OCI-LY7 (cell line): ENCODE measurements at regions of chr6 and their contacts with region 1.

Region 1: GRCh38 chr6:112180095-112180820 is 74.1 kb downstream of the LAMA4 start:
- DNase-seq: peak; percentile 78
- H3K4me3 ChIP-seq: no peak overlapping the region
- H3K27ac ChIP-seq: no peak overlapping the region
- H3K4me1 ChIP-seq: no peaks in the 10 kb centered on the region
- CTCF ChIP-seq: peak; percentile 95

Region 2: DNA sequence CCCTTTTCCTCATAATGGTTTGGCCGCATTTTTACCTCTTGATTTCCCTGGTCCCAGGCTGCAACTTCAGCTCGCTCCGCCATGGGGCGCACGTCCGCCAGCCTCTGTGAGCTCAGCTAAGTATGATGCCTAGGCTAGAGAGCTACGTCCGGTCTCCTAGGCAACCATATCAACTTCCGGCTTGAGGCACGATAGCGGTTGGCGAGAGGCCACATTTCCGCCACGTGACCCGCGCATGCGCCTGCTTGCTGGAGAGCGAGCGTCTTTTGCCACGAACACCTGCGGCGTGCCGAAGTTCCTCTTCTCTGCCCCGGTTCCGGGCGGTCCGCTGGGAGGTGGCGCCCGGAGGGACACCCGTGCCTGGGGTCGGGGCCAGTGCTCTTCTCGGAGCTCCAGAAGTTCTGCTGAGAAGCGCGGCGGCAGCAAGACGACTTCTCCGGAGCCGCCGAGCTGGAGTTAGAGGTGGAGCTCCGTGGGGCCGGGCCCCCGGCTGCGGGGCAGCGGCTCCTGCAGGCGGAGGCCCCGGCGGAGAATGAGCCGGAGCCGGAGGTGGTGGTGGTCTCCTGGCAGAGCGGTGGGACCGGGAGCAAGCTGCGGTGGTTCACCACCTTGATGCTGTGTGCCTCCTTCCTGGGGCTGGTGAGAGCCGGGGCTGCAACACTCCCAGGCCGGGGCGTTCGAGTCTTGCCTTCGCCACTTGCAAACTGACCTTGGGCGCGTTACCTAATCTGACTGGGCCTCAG is 921.0 kb before region 1 on chr6:
- CTCF ChIA-PET with region 1: no interaction called
- POLR2A ChIA-PET with region 1: no interaction called
- intact Hi-C with region 1: no loop called
- DNase-seq: peak; percentile 100
- H3K4me3 ChIP-seq: peak overlapping the region; percentile 81
- H3K27ac ChIP-seq: peak overlapping the region; percentile 67
- H3K4me1 ChIP-seq: peaks cover 17% of the 10 kb centered on the region
- CTCF ChIP-seq: peak; percentile 92

Region 3: GRCh38 chr6:112228480-112229332 is 48.4 kb after region 1 on chr6:
- CTCF ChIA-PET with region 1: no interaction called
- POLR2A ChIA-PET with region 1: no interaction called
- intact Hi-C with region 1: loop called (anchors 1 kb)
- DNase-seq: no peak
- H3K4me3 ChIP-seq: no peak overlapping the region
- H3K27ac ChIP-seq: no peak overlapping the region
- H3K4me1 ChIP-seq: no peaks in the 10 kb centered on the region
- CTCF ChIP-seq: no peak

Region 4: DNA sequence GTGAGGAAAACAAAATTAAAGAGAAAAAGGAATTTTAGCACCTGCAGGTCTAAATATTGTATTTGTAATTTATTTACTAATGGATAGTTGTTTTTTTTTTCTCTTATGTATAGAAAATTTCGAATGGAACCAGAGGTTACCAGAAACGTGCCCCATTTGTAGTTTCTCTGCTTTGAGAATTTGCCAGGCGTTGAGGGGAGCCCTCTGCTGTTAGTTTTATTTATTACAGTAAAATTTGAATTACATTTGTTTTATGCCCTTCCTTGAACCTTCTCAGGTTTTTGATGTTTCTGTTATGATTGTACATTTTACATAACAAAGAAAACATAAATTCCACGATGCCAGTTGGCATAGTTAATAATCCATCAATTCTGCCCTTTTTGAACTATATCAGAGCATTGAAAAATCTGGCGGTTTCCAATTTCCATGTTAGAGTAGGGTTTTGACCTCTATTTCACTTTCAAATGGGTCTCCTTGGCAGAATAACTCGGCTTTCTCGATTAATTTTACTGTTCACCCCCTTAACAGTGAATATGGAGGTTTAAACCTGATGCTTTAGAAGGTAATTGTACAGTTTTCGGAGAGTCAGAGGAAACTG is 131.8 kb after region 1 on chr6:
- CTCF ChIA-PET with region 1: no interaction called
- POLR2A ChIA-PET with region 1: no interaction called
- intact Hi-C with region 1: loop called (anchors 2 kb)
- DNase-seq: peak; percentile 4
- H3K4me3 ChIP-seq: no peak overlapping the region
- H3K27ac ChIP-seq: no peak overlapping the region
- H3K4me1 ChIP-seq: no peaks in the 10 kb centered on the region
- CTCF ChIP-seq: peak; percentile 84